ENCODE measurements at regions of chrX and their contacts with region 1.

Region 1: GRCh38 chrX:30713061-30713525 is 59.9 kb downstream of the GK start:
- DNase-seq: peak in 6 of 9 experiments; percentile 7 to 50 (median 37)
- ATAC-seq: peak; percentile 20
- H3K4me3 ChIP-seq: no peak overlapping the region
- H3K4me3 Mint-ChIP-seq: no peak overlapping the region
- H3K27ac ChIP-seq: no peak overlapping the region
- H3K27ac Mint-ChIP-seq: no peak overlapping the region
- H3K4me1 ChIP-seq: no peaks in the 10 kb centered on the region
- H3K4me1 Mint-ChIP-seq: peaks cover 4% of the 10 kb centered on the region
- H3K27me3 ChIP-seq: no peaks in the 10 kb centered on the region
- H3K27me3 Mint-ChIP-seq: no peaks in the 10 kb centered on the region
- CTCF ChIP-seq: no peak

Region 2: DNA sequence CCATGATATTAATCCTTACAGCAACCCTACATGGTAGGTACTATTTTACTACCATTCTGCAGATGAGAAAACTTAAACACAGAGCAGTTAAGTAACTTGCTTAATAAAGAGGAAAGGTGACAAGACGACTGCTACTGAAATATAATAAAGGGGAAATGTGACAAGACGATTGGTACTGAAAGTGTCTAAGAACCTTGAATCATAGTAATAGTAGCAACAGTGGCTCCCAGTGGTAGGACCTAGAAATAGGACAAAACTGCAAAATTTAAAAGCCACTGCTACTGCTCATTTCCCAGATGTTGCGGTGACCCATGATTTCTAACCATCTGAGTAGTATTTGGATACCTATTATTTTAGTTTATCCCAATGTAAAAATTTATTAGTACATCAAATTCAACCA is 225.0 kb before region 1 on chrX:
- CTCF ChIA-PET with region 1: no interaction called
- POLR2A ChIA-PET with region 1: no interaction called
- intact Hi-C with region 1: no loop called
- DNase-seq: no peak
- ATAC-seq: no peak
- H3K4me3 ChIP-seq: no peak overlapping the region
- H3K4me3 Mint-ChIP-seq: no peak overlapping the region
- H3K27ac ChIP-seq: no peak overlapping the region
- H3K27ac Mint-ChIP-seq: no peak overlapping the region
- H3K4me1 ChIP-seq: no peaks in the 10 kb centered on the region
- H3K4me1 Mint-ChIP-seq: no peaks in the 10 kb centered on the region
- H3K27me3 ChIP-seq: no peaks in the 10 kb centered on the region
- H3K27me3 Mint-ChIP-seq: no peaks in the 10 kb centered on the region
- CTCF ChIP-seq: no peak

Region 3: DNA sequence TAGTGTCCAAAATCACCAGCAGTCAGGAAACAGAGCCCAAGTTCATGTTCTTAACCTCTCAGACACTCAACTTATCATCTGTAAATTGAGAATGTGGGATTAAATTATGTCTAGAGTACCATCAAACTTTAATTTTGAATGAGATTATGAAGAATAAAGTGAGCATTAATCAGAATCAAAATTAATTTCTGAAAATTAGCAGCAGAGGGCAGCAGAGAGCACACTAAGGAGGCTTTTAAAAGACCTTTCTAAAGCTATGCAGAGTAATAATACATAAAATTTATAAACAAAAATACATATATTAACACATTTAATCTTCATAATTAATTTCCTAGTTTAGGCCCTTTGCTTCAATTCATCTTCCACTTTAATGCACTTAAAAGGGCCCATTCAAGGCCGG is 142.6 kb before region 1 on chrX:
- CTCF ChIA-PET with region 1: interaction called, 4 read pairs
- POLR2A ChIA-PET with region 1: no interaction called
- intact Hi-C with region 1: loop called in 1 of 2 experiments (anchors 1 kb)
- DNase-seq: peak in 2 of 9 experiments; percentile 39 to 53
- ATAC-seq: no peak
- H3K4me3 ChIP-seq: no peak overlapping the region
- H3K4me3 Mint-ChIP-seq: no peak overlapping the region
- H3K27ac ChIP-seq: no peak overlapping the region
- H3K27ac Mint-ChIP-seq: no peak overlapping the region
- H3K4me1 ChIP-seq: no peaks in the 10 kb centered on the region
- H3K4me1 Mint-ChIP-seq: peaks cover 16% of the 10 kb centered on the region
- H3K27me3 ChIP-seq: no peaks in the 10 kb centered on the region
- H3K27me3 Mint-ChIP-seq: no peaks in the 10 kb centered on the region
- CTCF ChIP-seq: peak; percentile 64

Region 4: DNA sequence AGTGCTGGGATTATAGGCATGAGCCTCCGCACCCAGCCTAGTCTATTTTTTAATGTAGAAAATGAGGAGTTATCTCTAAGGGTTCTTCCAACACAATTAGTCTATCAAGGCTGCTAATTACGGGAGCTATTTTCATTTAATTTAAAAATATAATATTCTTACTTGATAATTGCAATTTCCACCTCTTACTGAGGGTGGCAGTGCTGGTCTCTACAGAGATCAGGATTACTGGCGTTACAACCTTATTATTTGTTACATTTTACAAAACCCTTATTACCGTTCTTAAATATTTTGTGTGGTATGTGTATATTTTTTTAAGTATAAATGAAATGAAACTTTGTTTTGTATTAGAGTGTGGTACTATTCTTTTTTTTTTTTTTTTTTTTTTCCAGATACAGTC is 77.5 kb before region 1 on chrX:
- CTCF ChIA-PET with region 1: interaction called, 5 read pairs
- POLR2A ChIA-PET with region 1: no interaction called
- intact Hi-C with region 1: loop called in 1 of 2 experiments (anchors 2 kb)
- DNase-seq: peak in 2 of 9 experiments; percentile 15 to 30
- ATAC-seq: no peak
- H3K4me3 ChIP-seq: no peak overlapping the region
- H3K4me3 Mint-ChIP-seq: no peak overlapping the region
- H3K27ac ChIP-seq: no peak overlapping the region
- H3K27ac Mint-ChIP-seq: no peak overlapping the region
- H3K4me1 ChIP-seq: no peaks in the 10 kb centered on the region
- H3K4me1 Mint-ChIP-seq: no peaks in the 10 kb centered on the region
- H3K27me3 ChIP-seq: no peaks in the 10 kb centered on the region
- H3K27me3 Mint-ChIP-seq: no peaks in the 10 kb centered on the region
- CTCF ChIP-seq: peak; percentile 17

Region 5: GRCh38 chrX:30680618-30681017 is 32.5 kb before region 1 on chrX:
- CTCF ChIA-PET with region 1: no interaction called
- POLR2A ChIA-PET with region 1: no interaction called
- intact Hi-C with region 1: no loop called
- DNase-seq: no peak
- ATAC-seq: no peak
- H3K4me3 ChIP-seq: no peak overlapping the region
- H3K4me3 Mint-ChIP-seq: no peak overlapping the region
- H3K27ac ChIP-seq: no peak overlapping the region
- H3K27ac Mint-ChIP-seq: no peak overlapping the region
- H3K4me1 ChIP-seq: no peaks in the 10 kb centered on the region
- H3K4me1 Mint-ChIP-seq: no peaks in the 10 kb centered on the region
- H3K27me3 ChIP-seq: no peaks in the 10 kb centered on the region
- H3K27me3 Mint-ChIP-seq: no peaks in the 10 kb centered on the region
- CTCF ChIP-seq: no peak

Region 6: GRCh38 chrX:31190221-31190975 is 477.3 kb after region 1 on chrX:
- CTCF ChIA-PET with region 1: no interaction called
- POLR2A ChIA-PET with region 1: no interaction called
- intact Hi-C with region 1: no loop called
- DNase-seq: no peak
- ATAC-seq: no peak
- H3K4me3 ChIP-seq: no peak overlapping the region
- H3K4me3 Mint-ChIP-seq: no peak overlapping the region
- H3K27ac ChIP-seq: no peak overlapping the region
- H3K27ac Mint-ChIP-seq: no peak overlapping the region
- H3K4me1 ChIP-seq: no peaks in the 10 kb centered on the region
- H3K4me1 Mint-ChIP-seq: no peaks in the 10 kb centered on the region
- H3K27me3 ChIP-seq: no peaks in the 10 kb centered on the region
- H3K27me3 Mint-ChIP-seq: no peaks in the 10 kb centered on the region
- CTCF ChIP-seq: no peak

Measured in CD8-positive, alpha-beta T cell (primary cell).